Panc1 (cell line): ENCODE measurements at regions of chr7 and their contacts with region 1.

Region 1: GRCh38 chr7:148527707-148528168 is 62.8 kb upstream of the C7orf33 start:
- DNase-seq: peak; percentile 51
- ATAC-seq: peak; percentile 95
- H3K4me3 ChIP-seq: no peak overlapping the region
- H3K27ac ChIP-seq: no peak overlapping the region
- H3K4me1 ChIP-seq: no peaks in the 10 kb centered on the region
- H3K27me3 ChIP-seq: peaks cover 20% of the 10 kb centered on the region
- CTCF ChIP-seq: peak; percentile 87

Region 2: DNA sequence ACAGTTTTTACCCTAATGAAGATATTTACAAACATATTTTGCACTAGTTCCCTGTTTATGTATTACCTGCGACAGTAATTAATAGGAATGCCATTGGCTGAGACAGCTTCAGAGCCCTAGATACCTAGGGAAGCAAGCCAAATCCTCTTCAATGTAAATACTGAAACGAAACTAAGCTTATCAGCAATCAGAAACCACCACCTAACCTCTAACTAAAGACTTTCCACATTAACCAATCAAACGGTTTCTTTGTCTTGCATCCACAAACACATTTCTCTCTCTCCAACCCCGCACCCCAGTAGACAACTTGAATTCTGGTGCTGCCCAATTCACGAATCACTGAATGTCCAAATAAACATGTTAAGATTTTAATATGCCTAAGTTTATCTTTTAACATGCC is 411.5 kb before region 1 on chr7:
- CTCF ChIA-PET with region 1: no interaction called
- POLR2A ChIA-PET with region 1: no interaction called
- in situ Hi-C with region 1: no loop called
- intact Hi-C with region 1: no loop called
- DNase-seq: no peak
- ATAC-seq: no peak
- H3K4me3 ChIP-seq: no peak overlapping the region
- H3K27ac ChIP-seq: no peak overlapping the region
- H3K4me1 ChIP-seq: no peaks in the 10 kb centered on the region
- H3K27me3 ChIP-seq: no peaks in the 10 kb centered on the region; the same call in 1 of the 2 replicates
- CTCF ChIP-seq: no peak

Region 3: DNA sequence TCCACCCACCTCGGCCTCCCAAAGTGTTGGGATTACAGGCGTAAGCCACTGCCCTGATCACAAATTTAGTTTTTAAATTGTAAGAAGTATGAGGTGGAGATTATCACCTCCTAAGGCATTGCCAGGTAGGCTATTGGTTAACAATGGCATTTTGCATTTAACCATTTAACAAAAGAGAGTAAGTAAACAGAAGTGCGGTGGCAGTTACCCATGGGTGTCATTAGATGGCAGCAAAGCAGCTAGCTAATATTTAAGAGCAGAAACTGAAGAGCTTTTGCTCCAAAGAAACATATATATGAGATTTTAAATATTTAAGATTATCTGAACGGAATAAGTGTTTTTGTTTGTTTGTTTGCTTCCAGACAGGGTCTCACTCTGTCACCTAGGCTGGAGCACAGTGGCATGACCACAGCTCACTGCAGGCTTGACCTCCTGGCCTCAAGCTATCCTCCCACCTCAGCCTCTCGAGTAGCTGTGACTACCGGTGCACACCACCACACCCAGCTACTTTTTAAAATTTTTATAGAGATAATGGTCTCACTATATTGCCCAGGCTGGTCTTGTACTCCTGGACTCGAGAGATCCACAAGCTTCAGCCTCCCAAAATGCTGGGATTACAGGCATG is 262.7 kb before region 1 on chr7:
- CTCF ChIA-PET with region 1: no interaction called
- POLR2A ChIA-PET with region 1: no interaction called
- in situ Hi-C with region 1: no loop called
- intact Hi-C with region 1: loop called (anchors 1 kb)
- DNase-seq: peak; percentile 25
- ATAC-seq: 0 out of 2 replicates have a peak, but pooled peaks have one; percentile 58
- H3K4me3 ChIP-seq: no peak overlapping the region
- H3K27ac ChIP-seq: no peak overlapping the region
- H3K4me1 ChIP-seq: no peaks in the 10 kb centered on the region; the same call in 1 of the 2 replicates
- H3K27me3 ChIP-seq: 0 out of 2 replicates have a peak, but pooled peaks cover 2% of the 10 kb centered on the region
- CTCF ChIP-seq: peak; percentile 85

Region 4: DNA sequence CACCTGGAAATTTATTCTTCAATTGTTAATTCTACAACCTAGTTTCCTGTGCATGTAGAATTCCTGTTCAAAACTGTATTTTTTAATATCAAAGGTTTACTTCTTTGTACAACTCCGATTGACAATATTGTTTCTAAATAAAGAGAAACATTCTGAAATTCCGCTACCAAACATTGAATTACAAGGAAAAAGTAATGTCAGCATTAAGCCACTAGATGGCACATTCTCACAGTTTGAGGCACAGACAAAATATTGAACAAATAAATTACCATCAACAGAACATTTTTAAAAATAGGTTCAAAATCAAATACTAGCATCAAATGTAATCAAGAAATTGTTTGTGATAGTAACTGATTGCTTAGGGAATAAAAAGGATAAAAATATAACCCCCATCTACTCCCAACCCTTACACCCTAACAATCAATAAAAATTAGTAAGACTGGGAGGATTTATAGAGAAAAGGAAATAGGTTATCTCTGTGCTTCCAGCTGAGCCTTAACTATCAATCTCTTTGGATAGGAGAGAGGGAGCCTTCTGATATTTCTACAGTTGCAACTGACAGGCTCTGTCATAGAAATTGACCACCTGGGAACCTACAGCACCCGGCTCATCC is 23.8 kb before region 1 on chr7:
- CTCF ChIA-PET with region 1: no interaction called
- POLR2A ChIA-PET with region 1: interaction called, 7 read pairs
- in situ Hi-C with region 1: no loop called
- intact Hi-C with region 1: loop called (anchors 1 kb)
- DNase-seq: peak; percentile 18
- ATAC-seq: no peak
- H3K4me3 ChIP-seq: no peak overlapping the region
- H3K27ac ChIP-seq: no peak overlapping the region
- H3K4me1 ChIP-seq: no peaks in the 10 kb centered on the region; the same call in 1 of the 2 replicates
- H3K27me3 ChIP-seq: peaks cover 16% of the 10 kb centered on the region
- CTCF ChIP-seq: peak; percentile 74; the same call in 1 of the 2 replicates

Region 5: GRCh38 chr7:148611692-148612091 is 84.0 kb after region 1 on chr7:
- CTCF ChIA-PET with region 1: no interaction called
- POLR2A ChIA-PET with region 1: no interaction called
- in situ Hi-C with region 1: no loop called
- intact Hi-C with region 1: no loop called
- DNase-seq: no peak
- ATAC-seq: no peak
- H3K4me3 ChIP-seq: no peak overlapping the region
- H3K27ac ChIP-seq: no peak overlapping the region
- H3K4me1 ChIP-seq: no peaks in the 10 kb centered on the region
- H3K27me3 ChIP-seq: peaks cover 24% of the 10 kb centered on the region
- CTCF ChIP-seq: no peak